Left ventricle myocardium superior (tissue), 1 donor: ENCODE measurements at regions of chr18 and their contacts with region 1.

Region 1: DNA sequence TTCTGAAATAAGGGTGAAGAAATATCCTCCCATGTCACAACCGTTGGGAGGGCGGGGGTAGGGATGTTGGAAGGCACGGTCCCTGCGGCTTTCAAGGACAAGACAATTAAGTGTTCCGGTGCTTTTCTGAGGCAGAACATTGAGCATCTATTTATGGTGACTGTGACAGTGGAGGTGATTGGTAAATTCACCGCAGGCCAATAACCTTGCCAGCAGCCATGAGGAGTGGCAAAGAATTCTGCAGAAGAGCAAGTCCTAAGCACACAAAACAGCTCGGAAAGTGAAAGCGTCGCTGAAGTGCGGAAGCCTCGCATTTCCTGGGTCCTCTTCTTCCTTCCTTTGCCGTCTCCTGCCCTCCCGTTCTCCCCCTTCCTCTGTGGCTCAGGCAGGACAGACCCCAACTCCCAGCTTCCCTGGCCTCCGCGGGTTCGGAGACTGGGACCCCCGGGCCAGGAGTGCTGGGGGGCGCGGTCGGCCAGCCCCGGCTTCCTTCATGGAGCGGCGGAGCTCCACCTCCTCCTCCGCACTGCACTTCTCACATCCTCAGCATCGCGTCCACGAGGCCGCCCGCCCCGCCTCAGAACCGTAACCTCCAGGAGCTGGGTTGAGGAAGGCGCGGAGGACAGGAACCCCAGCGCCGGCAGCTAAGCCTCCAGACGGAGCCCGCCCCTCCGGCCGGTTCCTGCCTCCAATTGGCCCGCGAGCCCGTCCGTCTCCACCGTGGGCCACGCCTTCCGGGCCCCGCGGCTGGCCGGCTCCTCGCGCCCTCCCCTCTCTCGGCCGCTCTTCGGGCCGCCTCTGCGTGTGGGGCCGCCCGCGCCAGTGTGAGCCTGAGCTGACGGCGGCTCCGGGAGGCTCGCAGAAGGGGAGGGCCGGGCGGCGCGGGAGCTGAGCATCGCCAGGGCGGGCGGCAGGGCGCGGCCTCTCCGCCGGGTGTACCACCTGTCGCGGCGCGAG is at the start of gene ME2:
- DNase-seq: peak; percentile 95
- ATAC-seq: peak; percentile 99
- total RNA-seq, gene ME2: 119 TPM

Region 2: GRCh38 chr18:50559752-50560680 is 318.6 kb before region 1 on chr18 and contains the start of gene MAPK4:
- intact Hi-C with region 1: no loop called
- DNase-seq: peak; percentile 79
- ATAC-seq: peak; percentile 94
- total RNA-seq, gene MAPK4: 28.8 TPM

Region 3: DNA sequence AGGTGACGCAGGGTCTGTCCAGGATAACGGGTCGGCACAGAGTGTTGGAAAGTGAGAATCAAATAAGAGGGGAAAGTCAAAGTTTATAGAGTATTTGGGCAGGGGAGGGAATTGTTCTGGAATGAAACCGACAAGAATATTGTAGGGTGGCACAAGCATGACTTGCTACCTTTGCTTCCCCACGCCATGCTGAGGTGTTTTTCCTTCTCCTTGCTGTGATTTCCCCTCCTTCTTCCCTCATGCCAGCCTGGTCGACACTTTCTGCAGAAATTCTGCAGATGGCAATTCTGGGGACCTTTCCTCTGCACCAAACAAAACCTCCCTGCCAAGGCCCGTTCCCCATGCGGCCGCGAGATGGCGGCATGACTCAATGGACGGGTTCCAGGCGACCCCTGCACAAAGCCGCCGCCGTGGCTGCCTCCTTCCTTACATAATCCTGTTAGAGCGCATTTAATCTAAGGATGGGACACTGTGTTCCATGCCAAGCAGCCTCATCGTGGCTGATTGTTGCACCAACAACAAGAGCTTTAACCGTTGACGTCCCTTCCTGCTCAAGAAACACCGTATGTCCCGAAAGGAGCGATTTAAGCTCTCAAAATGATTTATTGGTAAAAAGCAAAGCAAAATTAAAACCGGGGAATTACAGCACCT is 58.8 kb before region 1 on chr18 and contains the start of gene MRO:
- intact Hi-C with region 1: loop called (anchors 5 kb)
- DNase-seq: peak; percentile 93
- ATAC-seq: peak; percentile 96
- total RNA-seq, gene MRO: 4.0 TPM

Region 4: DNA sequence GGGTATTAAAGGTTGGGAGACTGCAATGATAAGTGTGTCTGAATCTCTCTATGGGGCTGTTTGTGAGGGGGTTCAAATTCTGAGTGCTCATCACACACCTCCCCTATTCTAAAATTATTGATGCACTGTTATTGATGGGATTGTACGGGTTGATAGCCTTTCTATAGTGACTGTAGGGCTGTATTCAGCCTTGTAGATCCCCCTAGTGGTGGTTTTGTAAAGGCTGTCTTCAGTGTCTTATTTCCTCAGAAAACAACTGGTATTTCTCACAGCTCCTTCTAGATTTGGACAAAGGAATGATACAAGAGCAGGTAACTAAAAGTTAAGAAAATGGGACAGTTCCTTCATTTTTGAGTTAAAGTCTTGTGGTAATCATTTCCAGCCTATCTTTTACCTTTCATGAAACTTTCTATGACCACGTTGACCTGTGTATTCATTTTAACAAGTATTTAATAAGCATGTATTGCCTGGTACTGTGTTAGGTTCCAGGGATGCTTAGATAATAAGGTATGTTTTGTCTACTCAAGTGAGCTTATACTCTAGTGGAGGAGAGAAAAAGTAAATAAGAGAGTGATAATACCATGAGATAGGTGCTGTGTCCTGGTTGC is 172.6 kb after region 1 on chr18:
- intact Hi-C with region 1: no loop called
- DNase-seq: no peak
- ATAC-seq: peak; percentile 82